ENCODE measurements at regions of chr1 and their contacts with region 1.

Region 1: DNA sequence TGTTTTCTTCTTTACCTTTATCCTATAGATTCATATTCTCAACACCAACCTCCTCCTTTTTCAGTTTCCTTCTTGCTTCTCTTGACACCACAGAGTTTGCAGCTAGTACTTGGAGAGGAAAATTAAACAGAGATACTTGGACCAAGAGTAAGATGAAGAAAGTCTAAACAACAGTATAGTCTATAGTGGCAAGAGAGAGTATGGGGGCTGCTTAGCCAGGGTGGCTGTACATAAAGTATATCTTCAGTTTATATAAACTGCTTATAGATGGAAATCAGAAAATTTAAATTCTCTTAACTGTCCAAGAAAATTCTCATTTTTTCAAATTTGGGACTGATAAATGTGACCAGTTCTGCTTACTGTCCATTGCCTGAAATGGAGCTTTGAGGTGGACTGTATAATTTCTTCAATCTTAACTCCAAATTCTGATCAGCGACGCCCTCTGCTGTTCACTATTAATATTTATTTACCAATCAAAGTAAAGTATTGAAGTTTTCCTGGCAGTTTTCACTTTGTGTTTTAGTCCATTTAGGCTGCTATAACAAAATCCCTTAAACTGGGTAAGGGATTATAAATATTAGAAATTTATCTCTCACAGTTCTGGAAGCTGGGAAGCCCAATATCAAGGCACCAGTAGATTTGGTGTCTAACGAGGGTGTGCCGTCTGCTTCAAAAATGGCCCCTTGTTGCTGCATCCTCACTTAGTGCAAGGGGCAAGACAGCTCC is 14.8 kb upstream of the METTL18 start:
- DNase-seq: peak; percentile 16 to 43
- ATAC-seq: peak; percentile 59 to 82; a peak in 5 of 6 replicates
- H3K4me3 ChIP-seq: no peak overlapping the region
- H3K27ac ChIP-seq: no peak overlapping the region
- H3K4me1 ChIP-seq: no peaks in the 10 kb centered on the region
- CTCF ChIP-seq: peak; percentile 75
- EP300 ChIP-seq: no peak
- POLR2A ChIP-seq: no peak
- RAD21 ChIP-seq: peak; percentile 65 to 69

Region 2: DNA sequence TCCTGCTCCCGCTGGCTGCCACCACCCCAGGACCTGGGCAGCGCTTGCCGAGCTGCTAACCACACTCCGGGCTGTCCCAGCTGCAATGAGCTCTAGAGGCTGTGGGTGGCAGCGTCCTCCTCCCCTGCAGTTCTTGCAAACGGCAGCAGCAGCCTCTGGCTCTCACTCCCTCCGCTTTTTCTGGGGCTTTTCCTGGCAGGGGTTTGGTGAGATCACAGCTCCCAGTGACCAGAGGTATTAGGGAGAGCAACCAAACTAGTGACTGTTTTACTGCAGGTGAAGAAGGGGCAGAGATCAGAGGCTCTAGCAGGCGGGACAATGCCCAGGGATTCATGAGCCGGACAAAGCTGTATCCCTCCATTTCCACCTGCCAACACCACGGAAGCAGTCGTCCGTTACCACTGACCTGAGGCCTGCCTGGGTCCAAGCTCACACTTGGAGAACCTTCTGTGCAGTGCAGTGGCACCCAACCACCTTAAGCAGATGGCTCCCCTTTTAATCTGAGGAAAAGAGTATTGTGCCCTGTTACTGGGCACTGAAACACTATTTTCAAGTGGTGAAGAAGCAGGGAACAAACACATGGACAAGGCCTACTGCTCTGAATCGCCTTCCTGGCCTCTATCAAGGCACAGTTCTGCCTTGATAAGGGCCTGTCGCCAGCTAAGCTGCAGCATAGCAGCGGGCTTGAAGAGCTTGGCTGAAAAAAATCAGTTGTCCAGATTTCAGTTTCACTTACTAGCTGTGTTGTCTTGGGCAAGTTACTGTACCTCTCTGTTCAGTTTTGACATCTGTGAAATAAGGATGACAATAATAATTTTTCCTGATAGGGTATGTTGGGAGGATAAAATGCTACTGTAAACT is 222.9 kb before region 1 on chr1 and contains the start of gene F5:
- CTCF ChIA-PET with region 1: interaction called, 13 read pairs
- POLR2A ChIA-PET with region 1: no interaction called
- DNase-seq: peak; percentile 72 to 73
- ATAC-seq: peak; percentile 100
- H3K4me3 ChIP-seq: peak within 1 kb of the TSS; percentile 18; the same call in 2 of the 3 replicates
- H3K27ac ChIP-seq: no peak within 1 kb of the TSS
- H3K4me1 ChIP-seq: no peaks in the 10 kb centered on the region; the same call in 2 of the 3 replicates
- CTCF ChIP-seq: peak; percentile 26; the same call in 2 of the 3 replicates
- EP300 ChIP-seq: no peak
- POLR2A ChIP-seq: no peak
- RAD21 ChIP-seq: peak; percentile 34 to 55; a peak in 2 of 5 replicates
- polyA plus RNA-seq, gene F5: 0.36 and 1.4 TPM in 2 replicates

Region 3: DNA sequence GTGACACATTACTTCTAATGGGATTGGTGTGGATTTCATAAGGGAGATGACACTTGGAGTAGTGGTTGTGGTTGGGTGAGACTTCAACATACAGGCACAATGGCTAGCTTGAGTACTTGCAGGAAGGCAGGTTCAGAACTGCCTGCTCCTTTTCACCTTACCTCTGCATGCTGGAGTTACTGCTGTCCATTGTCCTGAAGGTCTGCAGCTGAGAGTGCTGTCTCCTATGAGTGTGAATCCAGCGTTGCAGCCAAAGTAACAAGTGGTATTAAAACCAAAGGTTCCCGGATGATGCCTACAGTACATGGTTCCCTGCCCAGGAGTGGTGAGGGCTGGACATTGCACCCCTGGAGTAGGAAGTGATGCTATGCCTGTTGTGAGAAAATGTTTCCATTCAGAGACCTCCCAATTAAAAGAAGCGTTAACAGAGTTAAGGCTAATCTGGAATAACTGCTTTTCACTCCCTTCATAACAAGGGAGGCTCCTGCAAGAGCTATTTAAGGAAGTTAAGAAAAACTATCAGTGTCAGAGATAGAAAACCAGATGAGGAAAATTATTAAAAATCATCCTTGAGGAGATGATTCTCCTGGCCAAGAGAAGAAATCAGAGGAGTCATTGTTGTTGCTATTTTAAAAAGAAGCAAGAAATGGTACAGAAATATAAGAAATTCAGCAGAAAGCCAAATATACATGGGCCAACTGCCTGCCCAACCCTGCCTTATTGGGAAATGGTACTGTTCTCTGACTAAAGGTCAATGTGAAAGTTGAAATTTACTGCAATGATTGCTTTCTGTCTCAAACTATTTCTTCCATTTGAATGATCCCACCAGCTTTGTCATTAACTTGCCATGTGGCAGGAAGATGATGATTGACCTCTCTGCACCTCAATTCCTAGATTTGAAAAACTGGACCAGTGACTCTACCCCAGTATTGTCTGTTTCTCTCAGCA is 213.5 kb before region 1 on chr1:
- CTCF ChIA-PET with region 1: interaction called, 35 read pairs
- POLR2A ChIA-PET with region 1: no interaction called
- DNase-seq: peak in 1 of 2 experiments; percentile 27
- ATAC-seq: peak; percentile 51 to 78; a peak in 5 of 6 replicates
- H3K4me3 ChIP-seq: no peak overlapping the region
- H3K27ac ChIP-seq: no peak overlapping the region
- H3K4me1 ChIP-seq: no peaks in the 10 kb centered on the region
- CTCF ChIP-seq: no peak
- EP300 ChIP-seq: no peak
- POLR2A ChIP-seq: no peak
- RAD21 ChIP-seq: no peak

Region 4: GRCh38 chr1:169601093-169601881 is 208.2 kb before region 1 on chr1:
- CTCF ChIA-PET with region 1: interaction called, 35 read pairs
- POLR2A ChIA-PET with region 1: no interaction called
- DNase-seq: peak; percentile 6 to 29
- ATAC-seq: peak; percentile 80; a peak in 4 of 6 replicates
- H3K4me3 ChIP-seq: no peak overlapping the region
- H3K27ac ChIP-seq: no peak overlapping the region
- H3K4me1 ChIP-seq: no peaks in the 10 kb centered on the region
- CTCF ChIP-seq: peak; percentile 59
- EP300 ChIP-seq: no peak
- POLR2A ChIP-seq: no peak
- RAD21 ChIP-seq: peak; percentile 54 to 62

Region 5: DNA sequence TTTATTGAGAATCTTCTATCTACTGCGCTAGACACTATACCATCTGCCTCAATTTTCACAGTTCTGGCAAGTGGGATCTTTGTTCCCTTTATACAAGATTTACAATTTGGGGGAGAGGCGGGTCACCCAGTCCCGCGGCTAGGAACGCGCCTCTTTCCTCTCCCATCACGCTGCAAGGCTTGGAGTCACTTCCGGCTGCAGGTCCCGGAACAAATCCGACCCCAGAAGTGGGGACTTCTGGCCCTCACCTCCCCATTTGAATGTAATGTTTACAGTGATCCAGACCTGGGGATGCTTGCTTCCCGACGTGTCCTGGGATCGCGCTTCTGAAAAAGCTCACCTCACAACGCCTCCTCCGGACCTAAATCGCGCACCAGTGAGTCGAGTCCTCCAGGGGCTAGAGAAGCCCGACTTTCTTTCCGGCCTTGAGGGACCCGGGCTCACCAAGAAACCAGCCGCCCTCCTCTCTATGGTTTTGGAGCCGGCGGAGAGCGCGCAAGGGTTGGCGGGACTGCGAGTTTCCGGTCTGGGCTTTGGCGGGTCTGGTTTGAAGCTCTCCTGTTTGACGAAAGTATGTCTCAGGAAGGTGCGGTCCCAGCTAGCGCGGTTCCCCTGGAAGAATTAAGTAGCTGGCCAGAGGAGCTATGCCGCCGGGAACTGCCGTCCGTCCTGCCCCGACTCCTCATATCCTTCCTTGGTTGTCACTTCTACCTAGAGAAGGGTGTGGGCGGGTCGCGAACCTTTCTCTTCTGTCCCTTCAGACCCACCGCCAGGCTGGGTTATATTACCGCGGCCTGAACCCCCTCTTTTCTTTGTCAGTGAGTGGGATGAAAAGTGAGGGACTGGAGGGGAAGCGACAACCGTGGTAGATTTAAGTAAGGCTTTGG is 14.8 kb before region 1 on chr1 and contains the start of gene METTL18:
- CTCF ChIA-PET with region 1: interaction called, 14 read pairs
- POLR2A ChIA-PET with region 1: no interaction called
- DNase-seq: peak; percentile 93 to 97
- ATAC-seq: peak; percentile 98 to 100
- H3K4me3 ChIP-seq: peak within 1 kb of the TSS; percentile 80
- H3K27ac ChIP-seq: peak within 1 kb of the TSS; percentile 97
- H3K4me1 ChIP-seq: peaks cover 7% of the 10 kb centered on the region; the same call in 2 of the 3 replicates
- CTCF ChIP-seq: no peak
- EP300 ChIP-seq: no peak
- POLR2A ChIP-seq: peak; percentile 38
- RAD21 ChIP-seq: no peak
- polyA plus RNA-seq, gene METTL18: 7.2 and 11.4 TPM in 2 replicates